Sigmoid colon (tissue), 7 donors: ENCODE measurements at regions of chr5 and their contacts with region 1.

Region 1: GRCh38 chr5:95669540-95669939 is 13.3 kb downstream of the SPATA9 start:
- DNase-seq: peak; percentile 96
- H3K4me3 ChIP-seq: no peak overlapping the region
- H3K27ac ChIP-seq: peak overlapping the region; percentile 69 to 89 (median 78)
- H3K4me1 ChIP-seq: peaks cover 0 to 35% (median 26%) of the 10 kb centered on the region in 4 donors
- H3K27me3 ChIP-seq: no peaks in the 10 kb centered on the region
- CTCF ChIP-seq: no peak
- EP300 ChIP-seq: peak; percentile 20 to 89 (median 42)
- POLR2A ChIP-seq: no peak

Region 2: DNA sequence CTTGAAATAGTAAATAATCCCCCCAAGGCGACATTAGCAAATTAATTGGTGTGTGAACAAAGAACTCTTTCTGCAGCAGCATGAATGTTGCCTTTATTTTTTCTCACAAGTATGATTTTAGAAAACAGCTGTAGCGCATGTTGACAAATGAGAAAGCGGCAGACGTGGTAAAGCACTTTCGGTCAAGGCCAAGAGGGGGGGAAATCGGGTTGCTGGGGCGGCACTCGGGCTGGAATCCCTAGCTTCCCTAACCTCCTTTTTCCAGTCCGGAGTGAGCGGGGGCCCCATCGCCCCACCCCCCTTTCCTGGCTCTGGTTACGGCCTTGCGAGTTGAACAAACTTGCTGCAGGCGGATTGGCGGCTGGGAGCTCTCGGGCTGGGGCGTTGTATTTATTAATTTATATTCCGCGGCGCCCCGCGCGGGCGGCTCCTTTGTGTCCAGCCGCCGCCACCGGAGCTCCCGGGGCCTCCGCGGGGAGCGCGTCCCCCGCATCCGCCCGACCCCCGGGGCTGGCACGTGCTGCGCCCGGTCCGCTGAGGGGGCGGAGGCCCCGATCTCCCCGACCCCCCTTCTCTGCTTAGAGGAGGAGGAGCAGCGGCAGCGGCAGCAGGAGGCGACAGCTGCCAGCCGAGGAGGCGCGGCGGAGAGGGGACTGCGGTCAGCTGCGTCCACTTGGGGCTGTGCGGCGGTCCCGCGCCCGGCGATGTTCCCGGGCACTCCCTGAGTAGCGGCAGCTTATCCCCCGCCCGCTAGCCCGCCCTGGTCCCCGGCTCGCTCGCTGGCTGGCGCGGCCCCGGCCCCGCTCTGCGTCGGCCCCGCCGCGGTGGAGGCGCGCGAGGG is 61.4 kb after region 1 on chr5 and contains the start of gene RHOBTB3:
- intact Hi-C with region 1: loop called (anchors 2 kb)
- DNase-seq: peak; percentile 96
- H3K4me3 ChIP-seq: peak within 1 kb of the TSS; percentile 71 to 92 (median 86)
- H3K27ac ChIP-seq: peak within 1 kb of the TSS; percentile 89 to 98 (median 94)
- H3K4me1 ChIP-seq: peaks cover 0 to 61% (median 46%) of the 10 kb centered on the region in 4 donors
- H3K27me3 ChIP-seq: no peaks in the 10 kb centered on the region
- CTCF ChIP-seq: no peak
- EP300 ChIP-seq: peak in 1 of 4 donors; percentile 28
- POLR2A ChIP-seq: peak; percentile 22 to 75
- total RNA-seq, gene RHOBTB3: 75.6 to 151 (median 111) TPM

Region 3: DNA sequence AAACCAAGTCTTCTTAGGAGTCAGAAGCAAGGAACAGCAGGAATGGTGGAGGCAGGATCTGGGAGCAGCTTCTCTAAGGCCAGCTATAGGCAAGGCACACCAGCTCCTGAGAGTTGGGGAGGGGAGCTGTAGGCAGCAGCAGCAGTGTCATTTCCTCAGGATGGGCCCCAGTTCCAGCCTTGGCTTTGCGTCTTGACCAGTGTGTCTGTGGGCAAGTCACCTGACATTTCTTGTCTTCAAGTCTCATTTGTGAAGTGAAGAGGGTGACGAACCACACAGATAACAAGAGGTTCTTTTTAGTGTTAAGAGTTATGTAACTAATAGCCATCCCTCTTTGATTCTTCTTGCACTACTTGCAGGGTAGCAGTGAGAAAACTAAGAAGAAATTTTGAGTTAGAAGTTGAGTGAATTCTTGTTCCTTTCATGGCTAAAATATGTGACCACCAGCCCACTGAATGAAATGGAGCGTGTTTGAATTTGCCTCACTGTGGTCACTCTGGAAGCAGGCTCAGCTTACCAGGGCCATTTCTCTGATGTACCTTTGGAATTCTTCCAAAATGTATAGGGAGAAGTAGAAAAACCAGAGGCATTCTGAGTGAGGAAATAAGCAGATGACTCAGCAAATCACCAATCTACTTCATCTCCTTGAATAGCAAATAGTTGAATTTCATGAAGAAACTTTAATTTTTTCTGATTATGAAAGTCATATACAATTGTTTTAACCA is 104.0 kb after region 1 on chr5:
- intact Hi-C with region 1: loop called (anchors 5 kb)
- DNase-seq: no peak
- H3K4me3 ChIP-seq: no peak overlapping the region
- H3K27ac ChIP-seq: no peak overlapping the region
- H3K4me1 ChIP-seq: peaks cover 0 to 17% (median 7%) of the 10 kb centered on the region in 4 donors
- H3K27me3 ChIP-seq: no peaks in the 10 kb centered on the region
- CTCF ChIP-seq: no peak
- EP300 ChIP-seq: no peak
- POLR2A ChIP-seq: no peak

Region 4: GRCh38 chr5:95781101-95781583 is 111.6 kb after region 1 on chr5:
- intact Hi-C with region 1: loop called (anchors 5 kb)
- DNase-seq: peak; percentile 93
- H3K4me3 ChIP-seq: no peak overlapping the region
- H3K27ac ChIP-seq: peak overlapping the region; percentile 56 to 60 (median 58)
- H3K4me1 ChIP-seq: peaks cover 0 to 14% (median 7%) of the 10 kb centered on the region in 4 donors
- H3K27me3 ChIP-seq: no peaks in the 10 kb centered on the region
- CTCF ChIP-seq: peak; percentile 83 to 92 (median 86)
- EP300 ChIP-seq: no peak
- POLR2A ChIP-seq: no peak

Region 5: DNA sequence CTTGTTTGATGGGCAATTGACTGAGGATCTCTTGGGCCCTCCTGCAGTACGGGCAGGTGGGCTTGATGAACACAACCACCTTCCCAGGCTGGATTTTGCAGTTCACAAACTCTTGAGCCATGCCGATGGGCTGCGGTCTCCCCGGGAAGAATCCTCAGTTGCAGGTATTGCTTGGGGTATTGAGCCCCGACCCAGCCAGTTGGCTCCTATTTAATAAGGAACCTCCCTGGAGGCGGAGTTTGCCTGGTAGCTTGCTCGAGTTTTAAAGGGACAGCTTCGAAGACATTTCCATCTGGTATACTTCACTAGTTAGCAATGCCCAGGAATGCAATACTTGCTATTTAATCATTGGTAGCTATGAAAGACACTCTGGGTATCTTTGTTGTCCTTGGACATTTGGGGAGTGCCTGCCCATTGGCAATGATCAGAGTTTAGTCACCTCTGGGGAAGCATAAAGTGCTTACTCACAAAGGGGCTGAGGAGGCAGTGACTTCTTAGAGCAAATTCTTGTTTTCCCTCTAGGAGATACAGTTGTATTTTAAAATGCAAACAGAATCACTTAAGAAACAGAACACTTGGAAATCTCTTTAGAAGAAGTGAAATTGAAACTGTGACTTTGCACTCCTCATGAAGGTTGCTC is 153.1 kb after region 1 on chr5 and contains the start of gene GLRX:
- intact Hi-C with region 1: loop called (anchors 5 kb)
- DNase-seq: peak; percentile 89
- H3K4me3 ChIP-seq: peak within 1 kb of the TSS; percentile 58 to 69 (median 64)
- H3K27ac ChIP-seq: peak within 1 kb of the TSS; percentile 83 to 89 (median 85)
- H3K4me1 ChIP-seq: peaks cover 0 to 53% (median 43%) of the 10 kb centered on the region in 4 donors
- H3K27me3 ChIP-seq: no peaks in the 10 kb centered on the region
- CTCF ChIP-seq: no peak
- EP300 ChIP-seq: no peak
- POLR2A ChIP-seq: peak in 1 of 2 donors; percentile 71
- total RNA-seq, gene GLRX: 30.2 to 43.2 (median 42.8) TPM